ENCODE measurements at regions of chr1 and their contacts with region 1.

Region 1: GRCh38 chr1:246566128-246566812 is at the starts of genes CNST and TFB2M:
- DNase-seq: peak; percentile 99
- H3K4me3 ChIP-seq: peak within 1 kb of the TSS; percentile 79 to 96 (median 84)
- H3K27ac ChIP-seq: peak within 1 kb of the TSS; percentile 92 to 99 (median 98)
- H3K4me1 ChIP-seq: peaks cover 0 to 61% (median 46%) of the 10 kb centered on the region in 4 donors
- H3K27me3 ChIP-seq: no peaks in the 10 kb centered on the region
- CTCF ChIP-seq: no peak
- EP300 ChIP-seq: peak in 1 of 4 donors; percentile 35
- POLR2A ChIP-seq: peak; percentile 87 to 93
- total RNA-seq, gene CNST: 26.0 to 39.2 (median 31.9) TPM
- total RNA-seq, gene TFB2M: 4.7 to 13.9 (median 12.6) TPM

Region 2: GRCh38 chr1:246051909-246052516 is 514.3 kb before region 1 on chr1:
- intact Hi-C with region 1: no loop called
- DNase-seq: no peak
- H3K4me3 ChIP-seq: no peak overlapping the region
- H3K27ac ChIP-seq: no peak overlapping the region
- H3K4me1 ChIP-seq: no peaks in the 10 kb centered on the region
- H3K27me3 ChIP-seq: no peaks in the 10 kb centered on the region
- CTCF ChIP-seq: no peak
- EP300 ChIP-seq: no peak
- POLR2A ChIP-seq: no peak

Region 3: GRCh38 chr1:246506674-246507481 is 59.4 kb before region 1 on chr1 and contains the start of gene SMYD3:
- intact Hi-C with region 1: loop called (anchors 2 kb)
- DNase-seq: peak; percentile 81
- H3K4me3 ChIP-seq: peak within 1 kb of the TSS; percentile 70 to 97 (median 90)
- H3K27ac ChIP-seq: peak within 1 kb of the TSS; percentile 68 to 79 (median 74)
- H3K4me1 ChIP-seq: peaks cover 0 to 14% (median 8%) of the 10 kb centered on the region in 4 donors
- H3K27me3 ChIP-seq: no peaks in the 10 kb centered on the region
- CTCF ChIP-seq: peak in 1 of 4 experiments; percentile 12
- EP300 ChIP-seq: no peak
- POLR2A ChIP-seq: peak in 1 of 2 donors; percentile 23
- total RNA-seq, gene SMYD3: 14.6 to 23.8 (median 17.1) TPM

Region 4: DNA sequence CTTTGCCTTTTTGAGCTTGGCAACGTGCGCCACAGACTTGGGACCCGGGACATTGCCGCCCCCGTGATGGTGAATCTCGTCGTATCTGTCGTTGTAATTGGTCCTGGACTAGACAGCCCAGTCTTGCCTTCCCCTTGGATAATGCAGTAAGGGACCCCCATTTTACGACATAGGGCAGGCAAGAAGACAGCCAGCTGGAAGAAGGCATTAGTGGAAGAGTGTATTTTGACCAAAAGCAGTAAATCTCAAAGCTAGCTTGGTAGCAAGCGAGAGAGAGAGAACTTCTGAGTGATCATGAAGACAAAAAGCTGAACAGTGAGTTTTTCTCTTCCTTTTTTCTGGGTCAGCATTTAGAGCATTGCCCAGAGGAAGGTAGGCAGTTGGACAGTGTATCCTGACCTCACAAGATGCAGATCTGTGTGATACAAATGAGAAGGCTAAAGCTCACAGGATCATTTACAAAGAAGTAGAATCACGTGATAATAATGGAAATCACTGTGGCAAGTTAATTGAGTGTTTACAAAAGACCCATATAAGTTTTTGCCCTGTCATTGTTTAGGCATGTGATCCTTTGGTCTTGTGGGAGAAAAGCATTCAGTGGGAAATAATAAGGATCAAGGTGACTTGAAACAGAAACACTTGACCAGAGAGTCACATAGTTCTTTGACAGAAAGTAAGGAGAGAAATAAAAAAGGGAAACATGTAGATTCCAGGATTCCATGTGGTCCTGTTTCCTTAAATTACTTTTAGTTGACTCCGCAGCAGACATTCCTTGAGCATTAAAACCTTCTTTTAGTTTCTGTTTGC is 66.2 kb after region 1 on chr1:
- intact Hi-C with region 1: loop called (anchors 5 kb)
- DNase-seq: no peak
- H3K4me3 ChIP-seq: peak overlapping the region in 1 of 4 donors; percentile 21
- H3K27ac ChIP-seq: peak overlapping the region; percentile 64 to 79 (median 76)
- H3K4me1 ChIP-seq: peaks cover 0 to 26% (median 13%) of the 10 kb centered on the region in 4 donors
- H3K27me3 ChIP-seq: no peaks in the 10 kb centered on the region
- CTCF ChIP-seq: no peak
- EP300 ChIP-seq: no peak
- POLR2A ChIP-seq: no peak

Region 5: DNA sequence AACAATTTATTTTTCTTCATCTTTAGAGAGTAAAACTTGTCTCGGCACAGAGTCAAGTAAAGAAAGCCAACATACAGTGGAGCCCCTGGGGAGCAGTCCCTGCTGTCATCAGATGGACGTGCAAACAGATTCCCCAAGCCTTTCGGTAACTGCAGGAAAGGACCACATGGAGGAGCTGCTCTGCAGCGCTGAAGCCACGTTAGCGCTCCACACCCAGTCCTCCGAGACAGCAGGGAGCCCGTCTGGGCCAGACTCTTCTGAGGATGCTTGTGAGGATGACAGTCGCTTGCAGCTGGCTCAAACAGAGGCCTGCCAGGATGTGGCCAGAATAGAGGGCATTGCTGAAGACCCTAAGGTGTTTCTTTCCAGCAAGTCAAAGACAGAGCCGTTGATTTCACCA is 80.8 kb after region 1 on chr1:
- intact Hi-C with region 1: loop called (anchors 5 kb)
- DNase-seq: peak; percentile 77
- H3K4me3 ChIP-seq: no peak overlapping the region
- H3K27ac ChIP-seq: peak overlapping the region; percentile 54 to 75 (median 60)
- H3K4me1 ChIP-seq: peaks cover 0 to 9% (median 6%) of the 10 kb centered on the region in 4 donors
- H3K27me3 ChIP-seq: no peaks in the 10 kb centered on the region
- CTCF ChIP-seq: peak; percentile 10 to 49 (median 29)
- EP300 ChIP-seq: no peak
- POLR2A ChIP-seq: no peak

Region 6: DNA sequence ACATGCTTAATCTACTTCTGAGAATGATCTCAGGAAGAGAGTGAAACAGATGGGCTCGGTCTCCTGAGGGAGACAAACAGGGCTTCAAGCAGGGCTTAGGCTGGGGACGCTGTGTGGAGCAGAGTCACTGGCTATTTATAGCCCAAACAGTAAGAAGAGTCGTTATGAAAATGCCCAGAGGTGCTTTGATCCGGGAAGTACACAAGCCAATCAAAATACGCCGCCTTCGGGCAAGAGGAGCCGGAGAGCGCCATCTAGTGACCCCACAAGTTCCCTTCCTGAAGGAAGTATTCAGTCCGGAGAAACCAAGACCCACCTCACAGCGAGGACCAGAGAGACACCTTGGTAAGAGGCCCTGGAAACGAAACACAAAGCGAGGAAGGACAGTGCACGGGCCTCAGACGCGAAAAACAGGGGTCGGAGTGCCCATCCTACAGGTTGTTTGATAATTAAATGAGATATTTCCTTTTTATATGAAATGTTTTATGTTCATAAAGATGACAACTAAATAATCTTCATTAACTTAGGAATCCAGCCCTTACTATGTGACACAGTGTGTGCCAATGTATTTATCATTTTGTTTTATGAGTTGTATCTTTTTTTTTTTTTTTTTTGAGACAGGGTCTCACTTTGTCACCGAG is 132.9 kb after region 1 on chr1:
- intact Hi-C with region 1: loop called (anchors 2 kb)
- DNase-seq: peak; percentile 95
- H3K4me3 ChIP-seq: peak overlapping the region; percentile 17 to 37 (median 27)
- H3K27ac ChIP-seq: peak overlapping the region; percentile 6 to 74 (median 56)
- H3K4me1 ChIP-seq: peaks cover 0 to 10% (median 2%) of the 10 kb centered on the region in 4 donors
- H3K27me3 ChIP-seq: no peaks in the 10 kb centered on the region
- CTCF ChIP-seq: peak; percentile 62 to 79 (median 69)
- EP300 ChIP-seq: no peak
- POLR2A ChIP-seq: no peak

Region 7: DNA sequence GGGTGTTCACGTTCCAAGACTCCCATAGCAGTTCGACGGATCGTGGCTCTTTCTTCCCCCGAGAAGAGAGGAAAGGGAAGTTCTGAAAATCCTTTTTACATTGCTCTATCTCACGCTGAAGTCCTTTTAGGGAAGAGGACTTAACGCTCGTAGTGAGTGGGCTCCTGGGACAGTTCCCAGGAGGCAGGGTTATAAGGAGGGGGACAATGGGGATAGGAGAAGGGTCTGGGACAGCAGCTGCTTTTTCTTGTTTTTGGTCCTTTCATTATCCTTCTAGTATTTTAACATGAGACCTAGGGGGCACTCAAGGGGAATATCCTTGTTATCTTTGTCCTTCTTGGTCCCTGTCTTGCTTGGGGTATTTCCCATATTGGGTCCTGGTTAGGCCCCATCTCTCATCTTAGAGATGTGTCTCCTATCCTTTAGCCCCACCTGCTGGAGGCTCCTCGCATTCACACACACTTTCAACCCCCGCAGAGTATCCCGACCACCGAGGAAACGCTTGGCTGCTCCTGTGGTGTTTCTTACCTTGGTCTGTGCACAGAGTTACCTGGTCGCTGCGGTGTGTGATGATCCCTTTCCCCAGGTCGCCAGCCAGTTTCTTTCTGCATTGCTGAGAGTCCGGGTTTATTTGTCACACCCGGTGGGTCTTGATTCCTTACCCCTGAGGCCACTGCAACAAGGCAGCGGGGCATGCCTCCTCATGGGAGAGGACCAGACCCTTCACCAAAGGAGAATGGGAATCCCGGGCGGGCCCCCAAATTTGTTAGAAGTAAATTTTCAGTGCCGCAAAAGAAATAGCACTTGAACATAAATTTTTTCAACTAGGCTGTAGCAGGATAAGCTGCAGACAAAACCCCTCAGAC is 187.6 kb after region 1 on chr1:
- intact Hi-C with region 1: loop called (anchors 5 kb)
- DNase-seq: peak; percentile 77
- H3K4me3 ChIP-seq: no peak overlapping the region
- H3K27ac ChIP-seq: peak overlapping the region in 2 of 4 donors; percentile 61 to 62
- H3K4me1 ChIP-seq: peaks cover 0 to 21% (median 14%) of the 10 kb centered on the region in 4 donors
- H3K27me3 ChIP-seq: no peaks in the 10 kb centered on the region
- CTCF ChIP-seq: peak; percentile 57 to 82 (median 69)
- EP300 ChIP-seq: no peak
- POLR2A ChIP-seq: no peak

Region 8: DNA sequence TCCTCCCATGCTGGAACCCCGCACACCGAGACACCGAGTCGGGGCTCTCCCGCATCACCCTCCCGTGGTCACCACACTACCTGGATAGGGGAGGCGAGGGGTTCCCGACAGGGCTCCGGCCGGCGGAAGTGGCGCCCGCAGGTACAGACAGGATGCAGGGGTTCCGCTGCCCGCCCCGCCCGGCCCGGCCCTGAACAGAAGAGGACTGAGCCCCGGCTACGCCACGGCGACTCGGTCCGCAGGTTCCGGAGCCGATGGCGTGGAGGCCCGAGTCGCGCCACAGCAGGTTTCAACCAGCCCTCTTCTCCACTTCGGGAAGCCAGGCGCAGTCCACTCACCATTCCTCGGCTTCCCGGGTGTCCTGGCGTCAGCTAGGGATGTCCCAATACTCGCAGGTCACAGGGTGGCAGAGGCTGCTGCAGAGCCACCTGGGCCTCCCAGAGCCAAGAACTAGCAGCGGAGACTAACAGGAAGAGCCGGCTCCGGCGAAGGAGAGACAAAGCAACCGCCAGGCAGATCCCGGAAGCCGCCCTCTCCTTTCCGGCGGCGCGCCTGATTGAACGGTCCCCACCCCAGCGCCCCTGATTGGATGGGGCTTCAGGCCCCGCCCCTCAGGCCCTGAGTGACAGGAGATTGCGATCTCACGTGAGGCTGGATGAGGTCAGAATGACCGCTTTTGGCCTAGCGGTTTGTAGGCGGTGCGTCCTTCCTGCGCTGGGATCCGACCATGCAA is 537.8 kb after region 1 on chr1 and contains the start of gene ZNF669:
- intact Hi-C with region 1: loop called (anchors 10 kb)
- DNase-seq: peak; percentile 99
- H3K4me3 ChIP-seq: peak within 1 kb of the TSS; percentile 76 to 91 (median 84)
- H3K27ac ChIP-seq: peak within 1 kb of the TSS; percentile 87 to 93 (median 88)
- H3K4me1 ChIP-seq: peaks cover 0 to 22% (median 18%) of the 10 kb centered on the region in 4 donors
- H3K27me3 ChIP-seq: no peaks in the 10 kb centered on the region
- CTCF ChIP-seq: no peak
- EP300 ChIP-seq: no peak
- POLR2A ChIP-seq: peak; percentile 75 to 78
- total RNA-seq, gene ZNF669: 4.2 to 5.8 (median 5.2) TPM

Region 9: DNA sequence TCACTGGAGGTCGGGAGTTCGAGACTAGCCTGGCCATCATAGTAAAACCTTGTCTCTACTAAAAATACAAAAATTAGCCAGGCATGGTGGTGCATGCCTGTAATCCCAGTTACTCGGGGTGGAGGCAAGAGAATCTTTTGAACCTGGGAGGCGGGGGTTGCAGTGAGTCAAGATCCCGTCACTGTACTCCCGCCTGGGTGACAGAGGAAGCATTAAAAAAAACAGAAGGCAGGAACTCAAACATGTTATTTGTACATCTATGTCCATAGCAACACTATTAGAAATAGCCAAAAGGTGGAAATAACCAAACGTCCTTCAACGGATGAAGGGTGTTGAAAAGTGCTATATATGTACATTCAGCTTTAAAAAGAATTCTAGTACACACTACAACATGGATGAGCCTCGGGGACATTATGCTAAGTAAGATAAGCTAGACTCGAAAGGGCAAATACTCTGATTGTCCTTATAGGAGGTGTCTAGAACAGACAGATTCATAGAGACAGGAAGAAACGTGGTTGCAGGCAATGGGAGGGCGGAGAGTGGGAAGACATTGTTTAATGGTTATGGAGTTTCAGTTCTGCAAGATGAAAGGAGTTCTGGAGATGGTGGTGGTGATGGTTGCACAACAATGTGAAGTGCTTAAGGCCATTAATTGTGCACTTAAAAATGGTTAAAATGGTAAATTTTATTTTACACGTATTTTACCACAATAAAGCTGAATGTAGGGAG is 868.9 kb after region 1 on chr1:
- intact Hi-C with region 1: no loop called
- DNase-seq: no peak
- H3K4me3 ChIP-seq: no peak overlapping the region
- H3K27ac ChIP-seq: no peak overlapping the region
- H3K4me1 ChIP-seq: no peaks in the 10 kb centered on the region
- H3K27me3 ChIP-seq: no peaks in the 10 kb centered on the region
- CTCF ChIP-seq: no peak
- EP300 ChIP-seq: no peak
- POLR2A ChIP-seq: no peak

Measured in sigmoid colon (tissue), 7 donors.